Activated T-helper 2 cell treated with anti-CD3 and anti-CD28 coated beads, Interferon-gamma antibody, Interleukin-2, Interleukin-4, amounts not matched to agents 10 μg/mL and 5 μg/mL and 100 μg/mL, durations not matched to agents 14 hours and 24 hours and 36 hours (primary cell): ENCODE measurements at regions of chr7 and their contacts with region 1.

Region 1: GRCh38 chr7:21497072-21497471 is 45.8 kb upstream of the DNAH11 start:
- DNase-seq: no peak
- H3K4me3 Mint-ChIP-seq: no peak overlapping the region
- H3K27ac Mint-ChIP-seq: no peak overlapping the region
- H3K4me1 Mint-ChIP-seq: no peaks in the 10 kb centered on the region
- H3K27me3 Mint-ChIP-seq: no peaks in the 10 kb centered on the region

Region 2: DNA sequence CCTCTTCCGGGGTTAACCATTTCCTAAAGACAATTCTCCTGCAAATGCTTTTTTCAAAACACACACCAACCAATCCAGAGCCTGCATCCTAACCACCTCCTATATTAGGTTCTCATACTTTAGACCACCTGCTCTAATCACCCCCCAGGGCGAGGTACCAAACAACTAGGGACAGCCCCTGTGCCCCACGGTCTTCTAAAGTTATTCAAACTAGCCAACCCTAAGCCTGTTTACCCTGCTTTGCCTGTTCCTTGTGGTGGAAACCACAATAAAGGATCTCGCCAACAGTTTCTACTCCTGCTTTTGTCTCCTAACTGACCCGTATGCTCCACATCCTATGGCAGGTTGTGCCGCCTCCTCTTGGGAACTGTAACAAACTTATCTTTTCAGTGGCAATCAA is 48.1 kb before region 1 on chr7:
- intact Hi-C with region 1: loop called (anchors 10 kb)
- DNase-seq: no peak
- H3K4me3 Mint-ChIP-seq: no peak overlapping the region
- H3K27ac Mint-ChIP-seq: no peak overlapping the region
- H3K4me1 Mint-ChIP-seq: peaks cover 28% of the 10 kb centered on the region
- H3K27me3 Mint-ChIP-seq: no peaks in the 10 kb centered on the region